T-cell (primary cell): ENCODE measurements at regions of chr10 and their contacts with region 1.

Region 1: GRCh38 chr10:1033601-1034000 is 7.9 kb upstream of the IDI2 start:
- DNase-seq: no peak
- ATAC-seq: no peak
- H3K4me3 ChIP-seq: no peak overlapping the region
- H3K4me3 Mint-ChIP-seq: no peak overlapping the region
- H3K27ac ChIP-seq: no peak overlapping the region
- H3K27ac Mint-ChIP-seq: no peak overlapping the region
- H3K4me1 ChIP-seq: no peaks in the 10 kb centered on the region
- H3K4me1 Mint-ChIP-seq: peaks cover 0 to 4% (median 3%) of the 10 kb centered on the region in 3 donors
- H3K27me3 ChIP-seq: no peaks in the 10 kb centered on the region
- H3K27me3 Mint-ChIP-seq: no peaks in the 10 kb centered on the region

Region 2: GRCh38 chr10:804787-805619 is 228.6 kb before region 1 on chr10:
- CTCF ChIA-PET with region 1: no interaction called
- POLR2A ChIA-PET with region 1: no interaction called
- DNase-seq: no peak
- ATAC-seq: no peak
- H3K4me3 ChIP-seq: no peak overlapping the region
- H3K4me3 Mint-ChIP-seq: no peak overlapping the region
- H3K27ac ChIP-seq: no peak overlapping the region
- H3K27ac Mint-ChIP-seq: no peak overlapping the region
- H3K4me1 ChIP-seq: peaks cover 0 to 10% of the 10 kb centered on the region in 2 experiments
- H3K4me1 Mint-ChIP-seq: peaks cover 5 to 9% (median 5%) of the 10 kb centered on the region in 3 donors
- H3K27me3 ChIP-seq: no peaks in the 10 kb centered on the region
- H3K27me3 Mint-ChIP-seq: no peaks in the 10 kb centered on the region

Region 3: DNA sequence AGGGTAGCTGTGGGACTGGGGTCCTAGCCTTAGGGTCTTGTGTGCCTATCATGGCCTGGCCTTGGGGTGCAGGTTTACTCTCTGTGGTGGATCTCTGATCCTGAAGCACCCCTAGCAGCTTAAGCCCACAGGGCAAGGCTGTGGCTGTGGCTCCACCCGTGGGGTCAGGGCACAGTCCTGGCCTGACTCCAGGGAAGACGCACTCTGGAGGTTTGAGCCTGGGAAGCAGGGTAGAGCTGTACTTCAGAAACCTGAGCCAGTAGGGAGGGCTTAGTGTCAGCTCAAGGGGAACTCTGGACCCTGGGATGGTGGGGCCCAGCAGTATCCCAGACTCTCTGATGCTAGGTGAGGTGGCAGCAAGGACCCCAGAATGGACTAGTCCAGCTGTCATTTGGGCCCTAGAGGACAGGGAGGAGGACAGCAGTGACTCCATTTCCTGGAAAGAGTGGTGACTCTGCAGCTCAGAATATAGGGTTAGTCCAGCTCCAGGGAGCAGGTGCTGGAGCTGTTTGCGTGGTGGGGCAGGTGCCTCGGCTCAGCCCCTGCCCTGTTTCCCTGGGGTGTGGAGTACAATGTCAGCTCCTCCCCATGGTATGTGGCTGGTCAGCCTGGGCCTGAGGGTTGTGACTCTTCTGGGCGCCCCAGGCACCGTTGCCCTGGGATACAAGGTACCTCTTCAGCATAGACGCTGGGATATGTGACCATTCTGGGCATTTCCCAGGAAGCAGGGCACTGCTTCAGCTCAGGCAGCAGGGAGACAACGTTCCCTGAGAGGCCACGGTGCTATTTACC is 29.5 kb before region 1 on chr10:
- CTCF ChIA-PET with region 1: no interaction called
- POLR2A ChIA-PET with region 1: interaction called in 1 of 2 experiments, 10 read pairs
- DNase-seq: no peak
- ATAC-seq: no peak
- H3K4me3 ChIP-seq: no peak overlapping the region
- H3K4me3 Mint-ChIP-seq: no peak overlapping the region
- H3K27ac ChIP-seq: no peak overlapping the region
- H3K27ac Mint-ChIP-seq: no peak overlapping the region
- H3K4me1 ChIP-seq: no peaks in the 10 kb centered on the region
- H3K4me1 Mint-ChIP-seq: peaks cover 2 to 13% (median 7%) of the 10 kb centered on the region in 3 donors
- H3K27me3 ChIP-seq: no peaks in the 10 kb centered on the region
- H3K27me3 Mint-ChIP-seq: no peaks in the 10 kb centered on the region

Region 4: DNA sequence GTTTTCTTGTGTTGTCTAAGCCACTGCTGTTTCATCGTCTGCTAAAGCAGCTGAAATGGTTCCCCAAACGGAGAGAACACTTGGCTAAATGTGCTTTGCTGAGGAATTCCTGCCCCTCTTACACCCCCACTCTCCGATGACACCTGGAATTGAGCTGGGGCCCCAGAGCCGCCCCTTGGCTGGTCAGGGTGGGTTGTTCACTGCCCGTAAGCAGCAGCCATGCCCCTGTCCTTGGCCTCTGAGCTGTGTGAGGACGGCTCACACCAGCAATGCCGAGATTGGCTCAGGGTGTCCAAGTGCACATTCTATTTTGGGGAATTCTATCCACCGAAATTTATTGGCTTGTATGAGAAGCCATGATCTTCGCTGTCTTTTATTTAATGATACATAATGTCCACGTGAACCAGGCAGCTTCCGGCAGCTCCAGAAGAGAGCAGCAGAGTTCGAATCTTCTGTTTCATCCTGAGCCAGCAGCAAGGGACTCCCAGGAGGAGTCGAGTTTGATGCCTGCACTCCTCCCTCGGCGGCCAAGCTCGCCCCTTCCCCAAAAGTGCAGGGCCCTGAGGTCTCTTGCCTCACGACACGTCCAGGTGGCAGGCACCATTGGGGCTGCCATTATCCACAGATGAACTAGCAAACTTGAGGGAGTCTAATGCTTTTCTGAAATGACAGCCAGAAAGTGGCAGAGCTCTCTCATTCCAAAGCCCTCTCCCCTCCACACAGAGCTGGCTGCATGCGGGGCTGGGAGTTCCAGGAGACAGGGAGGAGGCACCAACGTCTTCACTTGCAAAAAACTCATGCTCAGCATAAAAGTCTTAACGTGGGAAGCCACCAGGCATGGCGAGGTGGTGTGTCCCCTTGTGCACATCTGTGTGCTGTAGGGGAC is 136.6 kb after region 1 on chr10:
- CTCF ChIA-PET with region 1: no interaction called
- POLR2A ChIA-PET with region 1: no interaction called
- DNase-seq: no peak
- ATAC-seq: no peak
- H3K4me3 ChIP-seq: no peak overlapping the region
- H3K4me3 Mint-ChIP-seq: no peak overlapping the region
- H3K27ac ChIP-seq: no peak overlapping the region
- H3K27ac Mint-ChIP-seq: no peak overlapping the region
- H3K4me1 ChIP-seq: no peaks in the 10 kb centered on the region
- H3K4me1 Mint-ChIP-seq: no peaks in the 10 kb centered on the region
- H3K27me3 ChIP-seq: peaks cover 0 to 48% of the 10 kb centered on the region in 2 experiments
- H3K27me3 Mint-ChIP-seq: peaks cover 8% of the 10 kb centered on the region in 2 donors